Aorta (tissue), 5 donors: ENCODE measurements at regions of chr7 and their contacts with region 1.

Region 1: DNA sequence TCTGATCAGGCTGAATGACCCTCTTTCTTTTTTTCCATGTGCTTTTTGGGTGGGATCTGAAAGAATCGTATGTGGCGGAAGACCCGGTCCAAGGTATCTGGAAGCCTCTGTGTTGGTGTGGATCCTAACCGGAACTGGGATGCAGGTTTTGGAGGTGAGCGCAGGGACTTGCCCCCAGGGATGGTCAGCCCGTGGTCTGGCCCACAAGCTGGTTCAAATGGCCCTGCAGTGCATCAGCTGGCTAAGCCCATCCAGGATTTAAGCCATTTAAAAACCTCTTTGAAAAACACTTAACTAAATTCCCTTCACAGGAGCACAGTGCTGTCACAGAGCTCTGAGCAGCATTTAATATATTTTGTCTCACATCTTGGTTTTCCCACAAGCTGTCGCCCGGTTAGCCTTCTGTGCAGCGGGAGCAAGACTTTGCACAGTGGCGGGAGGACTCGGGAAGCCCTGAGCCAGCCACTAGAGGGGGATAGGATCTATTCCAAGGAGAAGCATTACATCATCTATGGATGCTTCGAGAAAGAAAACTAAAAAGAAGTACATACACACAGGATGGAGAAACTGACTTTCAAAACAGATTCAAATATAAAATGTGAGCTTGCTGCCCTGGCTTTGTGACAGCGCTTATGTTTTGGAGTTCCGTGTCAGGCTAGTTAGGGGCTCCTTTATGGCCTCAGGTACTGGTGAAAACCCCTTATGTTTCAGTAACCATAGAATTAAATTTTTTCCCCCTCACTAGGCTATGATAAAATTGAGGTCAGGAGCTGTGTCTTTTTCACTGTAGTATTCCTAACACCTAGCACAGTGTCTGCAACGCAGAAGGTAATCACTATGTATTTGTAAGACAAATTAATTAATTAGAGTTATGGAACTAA is 11.3 kb downstream of the CPA2 start:
- DNase-seq: peak; percentile 77 to 82
- ATAC-seq: peak; percentile 77
- H3K4me3 ChIP-seq: no peak overlapping the region
- H3K27ac ChIP-seq: no peak overlapping the region
- H3K4me1 ChIP-seq: no peaks in the 10 kb centered on the region
- H3K27me3 ChIP-seq: no peaks in the 10 kb centered on the region

Region 2: DNA sequence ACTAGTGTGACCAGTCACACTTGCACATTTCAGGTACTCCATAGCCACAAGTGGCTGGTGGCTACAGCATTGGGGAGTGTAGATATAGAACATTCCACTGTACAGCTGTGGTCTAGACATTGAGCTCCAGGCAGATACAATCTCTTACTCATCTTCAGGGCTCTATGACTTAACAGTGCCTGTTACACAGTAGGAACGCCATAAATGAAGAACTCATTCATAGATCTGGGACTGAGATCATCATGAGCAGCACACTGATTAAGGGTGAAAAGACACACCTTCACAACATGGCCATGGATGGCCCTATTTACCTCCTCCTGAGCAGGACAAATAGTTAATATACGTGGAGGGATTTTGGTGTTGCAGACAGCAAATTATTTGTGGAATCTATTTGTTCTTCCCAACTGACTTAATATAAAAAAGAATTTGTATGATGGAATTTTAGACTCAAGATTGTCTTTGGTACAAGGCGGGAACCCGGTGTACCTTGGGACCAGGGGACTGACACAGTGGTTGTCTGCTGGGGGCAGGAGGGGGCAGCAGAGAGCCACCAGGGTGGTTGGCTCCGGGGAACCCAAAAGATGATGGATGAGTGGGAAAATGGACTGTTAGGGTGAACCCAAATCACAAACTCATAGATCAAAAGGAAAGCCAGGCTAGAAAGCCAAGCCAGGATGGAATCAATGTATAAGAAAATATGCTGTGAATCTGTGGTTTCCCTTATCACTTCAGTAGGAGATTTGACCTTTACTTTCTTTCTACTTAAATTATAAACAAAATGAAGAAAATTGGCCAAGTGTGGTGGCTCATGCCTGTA is 35.6 kb before region 1 on chr7:
- intact Hi-C with region 1: no loop called
- DNase-seq: peak; percentile 66 to 87
- ATAC-seq: peak; percentile 79
- H3K4me3 ChIP-seq: no peak overlapping the region
- H3K27ac ChIP-seq: no peak overlapping the region
- H3K4me1 ChIP-seq: no peaks in the 10 kb centered on the region
- H3K27me3 ChIP-seq: no peaks in the 10 kb centered on the region

Region 3: GRCh38 chr7:130292682-130293257 is 14.8 kb after region 1 on chr7 and contains the start of gene CPA4:
- intact Hi-C with region 1: loop called in 1 of 2 experiments (anchors 2 kb)
- DNase-seq: peak; percentile 74 to 82
- ATAC-seq: peak; percentile 87
- H3K4me3 ChIP-seq: no peak within 1 kb of the TSS
- H3K27ac ChIP-seq: peak within 1 kb of the TSS; percentile 58 to 93
- H3K4me1 ChIP-seq: peaks cover 0 to 4% of the 10 kb centered on the region in 2 donors
- H3K27me3 ChIP-seq: no peaks in the 10 kb centered on the region
- total RNA-seq, gene CPA4: 0.45 to 1.0 TPM

Region 4: GRCh38 chr7:130394421-130395195 is 116.6 kb after region 1 on chr7:
- intact Hi-C with region 1: loop called in 1 of 2 experiments (anchors 5 kb)
- DNase-seq: no peak
- ATAC-seq: no peak
- H3K4me3 ChIP-seq: no peak overlapping the region
- H3K27ac ChIP-seq: no peak overlapping the region
- H3K4me1 ChIP-seq: no peaks in the 10 kb centered on the region
- H3K27me3 ChIP-seq: no peaks in the 10 kb centered on the region

Region 5: GRCh38 chr7:130440527-130441365 is 162.7 kb after region 1 on chr7 and contains the start of gene CEP41:
- intact Hi-C with region 1: loop called (anchors 5 kb)
- DNase-seq: peak; percentile 98 to 99
- ATAC-seq: peak; percentile 98
- H3K4me3 ChIP-seq: peak within 1 kb of the TSS; percentile 61 to 80
- H3K27ac ChIP-seq: no peak within 1 kb of the TSS
- H3K4me1 ChIP-seq: no peaks in the 10 kb centered on the region
- H3K27me3 ChIP-seq: no peaks in the 10 kb centered on the region
- total RNA-seq, gene CEP41: 6.2 to 6.6 TPM

Region 6: GRCh38 chr7:130490888-130491804 is 213.1 kb after region 1 on chr7:
- intact Hi-C with region 1: loop called (anchors 5 kb)
- DNase-seq: peak; percentile 57 to 80
- ATAC-seq: peak; percentile 70
- H3K4me3 ChIP-seq: no peak overlapping the region
- H3K27ac ChIP-seq: no peak overlapping the region
- H3K4me1 ChIP-seq: no peaks in the 10 kb centered on the region
- H3K27me3 ChIP-seq: no peaks in the 10 kb centered on the region

Region 7: DNA sequence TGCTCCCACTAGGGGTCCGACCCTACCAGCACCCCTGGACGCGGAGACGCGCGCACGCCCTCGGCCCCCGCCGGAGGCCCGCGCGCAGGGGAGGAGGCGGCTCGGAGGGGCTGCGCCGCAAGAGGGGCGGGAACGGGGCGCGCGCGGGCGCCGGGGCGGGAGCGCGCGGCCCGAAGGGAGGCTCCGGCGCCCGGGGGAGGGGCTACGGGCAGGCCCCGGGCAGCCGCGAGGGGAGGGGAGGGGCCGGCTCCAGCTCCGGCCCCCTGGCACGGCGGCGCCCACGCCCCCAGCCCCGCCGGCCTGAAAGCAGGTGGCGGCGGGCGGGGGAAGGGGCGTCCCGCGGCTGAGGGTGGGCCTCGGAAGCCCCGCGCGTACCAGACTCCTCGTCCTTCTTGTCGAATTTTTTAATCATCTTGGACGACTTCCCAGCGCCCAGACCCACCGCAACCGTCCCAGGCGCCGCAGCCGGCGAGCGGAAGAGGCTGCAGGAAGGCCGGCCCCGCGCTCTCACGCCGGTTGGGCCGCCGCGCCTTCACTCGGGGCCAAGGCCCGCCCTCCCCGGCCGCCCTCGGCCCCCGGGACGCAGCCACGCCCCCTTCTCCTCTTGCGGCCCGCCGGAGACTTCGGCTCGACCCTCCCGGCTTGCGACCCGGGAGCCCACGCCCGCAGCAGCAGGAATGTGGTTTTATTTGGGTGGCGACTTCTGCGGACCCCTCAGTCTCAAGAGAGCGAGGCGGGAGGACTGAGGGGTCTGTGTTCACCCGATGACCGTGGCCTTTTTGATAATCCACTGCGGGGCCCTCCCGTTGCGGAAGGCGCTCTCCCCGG is 390.5 kb after region 1 on chr7 and contains the start of gene COPG2:
- intact Hi-C with region 1: loop called in 1 of 2 experiments (anchors 10 kb)
- DNase-seq: peak; percentile 88 to 95
- ATAC-seq: peak; percentile 98
- H3K4me3 ChIP-seq: peak within 1 kb of the TSS; percentile 62 to 81
- H3K27ac ChIP-seq: peak within 1 kb of the TSS in 1 of 2 donors; percentile 15
- H3K4me1 ChIP-seq: peaks cover 0 to 2% of the 10 kb centered on the region in 2 donors
- H3K27me3 ChIP-seq: no peaks in the 10 kb centered on the region
- total RNA-seq, gene COPG2: 9.7 to 13.2 TPM